ENCODE measurements at regions of chr19 and their contacts with region 1.

Region 1: DNA sequence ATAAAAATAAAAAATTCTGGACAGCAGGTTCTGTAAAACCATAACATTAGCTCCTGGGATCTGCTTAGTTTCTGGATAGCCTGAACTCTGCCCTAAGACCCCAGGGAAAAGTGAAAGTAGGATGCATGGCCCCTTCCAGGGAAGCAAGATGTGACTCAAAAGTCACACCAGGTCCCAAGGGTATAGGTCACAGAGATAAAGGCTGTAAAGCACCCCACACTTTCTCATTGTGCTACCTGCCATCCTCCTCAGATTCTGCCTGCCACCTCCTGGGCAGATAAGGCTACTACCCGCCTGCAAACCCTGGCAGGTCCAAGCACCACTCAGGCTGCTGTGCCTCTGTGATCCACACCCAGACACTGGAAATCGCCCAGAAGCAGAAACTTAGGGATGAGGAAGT is 20.6 kb downstream of the FFAR2 start:
- DNase-seq: peak; percentile 81
- ATAC-seq: peak; percentile 99
- H3K4me3 Mint-ChIP-seq: no peak overlapping the region
- H3K27ac Mint-ChIP-seq: no peak overlapping the region
- H3K4me1 Mint-ChIP-seq: peaks cover 7% of the 10 kb centered on the region
- H3K27me3 Mint-ChIP-seq: peaks cover 3% of the 10 kb centered on the region

Region 2: GRCh38 chr19:35357867-35358573 is 110.6 kb before region 1 on chr19 and contains the start of gene FFAR3:
- CTCF ChIA-PET with region 1: interaction called, 76 read pairs
- DNase-seq: peak; percentile 22
- ATAC-seq: no peak
- H3K4me3 Mint-ChIP-seq: no peak within 1 kb of the TSS
- H3K27ac Mint-ChIP-seq: no peak within 1 kb of the TSS
- H3K4me1 Mint-ChIP-seq: peaks cover 19% of the 10 kb centered on the region
- H3K27me3 Mint-ChIP-seq: peaks cover 35% of the 10 kb centered on the region
- total RNA-seq, gene FFAR3: not detected